Calu3 (cell line): ENCODE measurements at regions of chr10 and their contacts with region 1.

Region 1: DNA sequence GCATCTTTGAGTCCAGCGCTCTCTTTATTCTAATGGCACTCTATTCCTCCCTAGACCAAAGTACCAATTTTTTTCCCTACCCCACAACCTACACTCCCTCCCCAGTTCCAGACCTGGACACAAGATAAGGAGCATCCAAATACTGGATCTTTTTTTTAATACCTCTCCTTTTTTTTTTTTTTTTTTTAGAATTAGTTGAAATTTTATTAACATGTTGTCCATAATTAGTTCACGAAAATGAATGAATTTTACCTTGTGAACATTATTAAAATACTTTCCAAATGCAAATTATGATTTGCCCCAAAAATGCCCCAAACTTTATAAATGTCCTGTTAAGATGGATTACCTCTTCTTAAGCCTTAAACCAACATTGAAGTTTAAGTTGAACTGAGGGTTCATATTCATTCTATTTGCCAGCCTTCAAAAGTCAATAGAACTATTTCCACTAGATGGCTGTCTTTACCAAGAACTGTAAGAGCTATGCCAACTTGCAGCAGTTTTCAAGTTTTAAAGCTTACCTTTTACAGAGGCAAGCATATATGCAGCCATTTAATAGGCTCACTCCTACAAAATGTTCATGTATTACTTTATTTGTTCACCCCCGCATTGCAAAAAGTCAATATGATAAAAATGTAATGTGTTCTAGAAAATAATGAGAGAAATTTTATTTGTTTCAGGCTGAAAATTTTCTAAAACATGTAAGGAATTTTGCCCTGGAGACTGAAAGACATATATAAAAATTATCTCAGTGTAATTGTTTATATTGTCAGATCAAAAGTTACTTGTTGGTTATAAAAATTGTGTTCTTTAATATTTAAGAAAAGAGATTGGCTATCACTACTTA is 39.7 kb upstream of the TNKS2 start:
- DNase-seq: no peak
- H3K4me3 Mint-ChIP-seq: no peak overlapping the region
- H3K27ac Mint-ChIP-seq: no peak overlapping the region
- H3K4me1 Mint-ChIP-seq: no peaks in the 10 kb centered on the region
- H3K27me3 Mint-ChIP-seq: peaks cover 17% of the 10 kb centered on the region
- CTCF ChIP-seq: peak; percentile 25

Region 2: GRCh38 chr10:91908337-91909116 is 150.0 kb after region 1 on chr10:
- CTCF ChIA-PET with region 1: interaction called, 4 read pairs
- intact Hi-C with region 1: loop called (anchors 1 kb)
- DNase-seq: peak; percentile 76
- H3K4me3 Mint-ChIP-seq: peak overlapping the region; percentile 79
- H3K27ac Mint-ChIP-seq: no peak overlapping the region
- H3K4me1 Mint-ChIP-seq: peaks cover 20% of the 10 kb centered on the region
- H3K27me3 Mint-ChIP-seq: peaks cover 10% of the 10 kb centered on the region
- CTCF ChIP-seq: no peak

Region 3: DNA sequence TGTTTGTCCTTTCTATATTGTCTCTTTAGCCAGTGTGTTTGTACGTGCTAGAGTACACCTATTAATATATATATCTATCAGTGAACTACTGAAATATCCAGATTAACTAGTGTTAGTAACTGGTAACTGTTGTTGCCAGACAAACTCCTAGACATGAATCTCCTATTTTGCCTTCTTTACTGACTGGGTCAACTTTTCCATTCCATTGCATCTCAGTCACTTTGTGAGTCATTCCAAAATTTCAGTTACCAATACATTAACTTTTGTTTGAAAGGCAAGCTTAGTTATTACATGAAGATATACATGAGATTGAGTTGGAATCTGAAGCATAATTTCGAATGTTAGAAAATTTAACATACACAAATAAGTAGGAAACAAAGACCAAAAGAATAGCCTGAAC is 216.4 kb after region 1 on chr10:
- CTCF ChIA-PET with region 1: interaction called, 11 read pairs
- intact Hi-C with region 1: no loop called
- DNase-seq: no peak
- H3K4me3 Mint-ChIP-seq: no peak overlapping the region
- H3K27ac Mint-ChIP-seq: no peak overlapping the region
- H3K4me1 Mint-ChIP-seq: no peaks in the 10 kb centered on the region
- H3K27me3 Mint-ChIP-seq: no peaks in the 10 kb centered on the region
- CTCF ChIP-seq: no peak